ENCODE measurements at regions of chr17 and their contacts with region 1.

Region 1: DNA sequence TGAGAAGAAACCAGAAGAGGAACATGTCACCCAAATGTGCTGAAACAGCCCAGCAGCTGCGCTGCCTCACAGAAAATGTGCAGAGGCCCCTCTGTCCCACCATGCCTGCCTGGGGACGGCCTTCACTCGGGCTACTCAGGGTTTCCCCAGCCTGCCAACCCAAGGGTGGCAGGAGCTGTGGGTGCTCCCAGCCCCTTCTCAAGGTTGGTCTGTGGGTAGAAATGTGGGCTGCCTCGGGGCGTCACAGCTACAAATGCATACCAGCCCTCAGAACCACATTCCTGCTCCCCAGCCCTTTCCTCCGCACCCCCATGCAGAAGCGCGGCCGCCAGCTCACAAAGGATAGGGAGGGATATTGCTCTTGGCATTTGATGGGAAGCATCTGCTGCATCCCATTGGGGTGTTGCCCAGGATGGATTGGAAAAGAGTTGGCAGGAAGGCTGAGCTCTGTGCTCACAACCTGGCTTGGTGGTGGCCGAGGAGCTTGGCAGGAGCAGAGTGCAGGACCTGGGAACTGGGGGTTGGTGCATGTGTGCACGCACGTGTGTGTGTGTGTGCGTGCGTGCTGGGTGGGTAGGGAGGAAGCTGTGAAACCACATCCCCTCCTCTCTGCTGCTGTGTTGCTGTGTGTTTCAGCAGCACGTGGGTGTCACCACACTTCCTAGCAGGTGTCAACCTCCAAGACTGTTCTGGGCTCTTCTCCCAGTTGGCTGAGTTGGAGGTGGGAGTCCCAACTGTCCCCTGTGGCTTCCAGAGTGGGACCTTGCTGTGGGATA is 304.4 kb downstream of the SEC14L1 start:
- DNase-seq: peak; percentile 77 to 98
- ATAC-seq: peak; percentile 61 to 84 (median 72)
- H3K4me3 ChIP-seq: peak overlapping the region; percentile 27
- H3K4me3 Mint-ChIP-seq: peak overlapping the region; percentile 67
- H3K27ac ChIP-seq: peak overlapping the region; percentile 90
- H3K27ac Mint-ChIP-seq: peak overlapping the region; percentile 86
- H3K4me1 ChIP-seq: peaks cover 98% of the 10 kb centered on the region
- H3K4me1 Mint-ChIP-seq: peaks cover 74 to 87% of the 10 kb centered on the region in 2 donors
- H3K27me3 ChIP-seq: no peaks in the 10 kb centered on the region
- H3K27me3 Mint-ChIP-seq: no peaks in the 10 kb centered on the region
- CTCF ChIP-seq: no peak

Region 2: GRCh38 chr17:77345260-77345910 is 99.8 kb before region 1 on chr17:
- intact Hi-C with region 1: loop called (anchors 1 kb)
- DNase-seq: no peak
- ATAC-seq: no peak
- H3K4me3 ChIP-seq: no peak overlapping the region
- H3K4me3 Mint-ChIP-seq: no peak overlapping the region
- H3K27ac ChIP-seq: no peak overlapping the region
- H3K27ac Mint-ChIP-seq: no peak overlapping the region
- H3K4me1 ChIP-seq: peaks cover 41% of the 10 kb centered on the region
- H3K4me1 Mint-ChIP-seq: peaks cover 50 to 51% of the 10 kb centered on the region in 2 donors
- H3K27me3 ChIP-seq: no peaks in the 10 kb centered on the region
- H3K27me3 Mint-ChIP-seq: no peaks in the 10 kb centered on the region
- CTCF ChIP-seq: no peak

Region 3: DNA sequence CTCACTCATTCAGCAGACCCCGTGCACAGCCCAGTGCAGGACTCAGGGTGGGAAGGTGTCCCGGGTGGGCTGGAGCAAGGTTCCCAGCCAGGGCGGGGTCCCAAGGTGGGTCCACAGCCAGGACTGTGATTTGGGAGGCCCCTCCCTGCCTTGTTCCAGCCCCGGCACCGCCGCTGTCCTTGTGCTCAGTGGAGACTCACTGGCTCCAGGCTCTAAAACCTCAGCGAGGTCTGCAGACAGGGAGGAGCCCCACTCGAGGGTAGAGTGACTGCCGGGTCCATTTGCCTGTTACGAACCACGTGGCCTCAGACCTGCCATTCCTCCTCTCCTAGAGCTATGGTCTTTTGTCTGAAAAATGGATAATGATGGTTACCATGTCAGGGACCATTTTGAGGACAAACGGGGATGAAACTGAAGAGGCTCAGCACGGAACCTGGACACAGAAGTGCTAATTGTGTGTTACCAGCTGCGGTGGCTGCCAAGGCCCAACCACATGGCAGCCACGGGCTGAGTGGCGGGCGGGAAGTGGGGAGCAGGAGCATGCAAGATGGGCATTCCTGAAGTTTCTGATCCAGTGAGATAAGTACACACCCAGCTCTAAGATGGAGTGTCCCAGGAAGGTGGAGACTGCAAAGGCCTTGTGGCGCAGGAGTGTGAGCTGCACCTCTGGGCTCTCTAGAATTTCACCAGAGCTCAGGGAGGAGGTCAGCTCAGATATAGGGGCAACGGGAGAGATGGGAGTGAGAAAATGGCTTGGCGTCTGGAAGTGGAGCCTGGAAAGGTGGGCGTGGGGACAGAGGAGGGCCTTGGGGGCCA is 13.2 kb after region 1 on chr17:
- intact Hi-C with region 1: loop called (anchors 2 kb)
- DNase-seq: peak in 1 of 2 donors; percentile 67
- ATAC-seq: peak in 2 of 3 donors; percentile 24 to 42
- H3K4me3 ChIP-seq: no peak overlapping the region
- H3K4me3 Mint-ChIP-seq: peak overlapping the region; percentile 78
- H3K27ac ChIP-seq: peak overlapping the region; percentile 85
- H3K27ac Mint-ChIP-seq: peak overlapping the region; percentile 94
- H3K4me1 ChIP-seq: peaks cover 100% of the 10 kb centered on the region
- H3K4me1 Mint-ChIP-seq: peaks cover 87 to 99% of the 10 kb centered on the region in 2 donors
- H3K27me3 ChIP-seq: no peaks in the 10 kb centered on the region
- H3K27me3 Mint-ChIP-seq: no peaks in the 10 kb centered on the region
- CTCF ChIP-seq: no peak

Region 4: GRCh38 chr17:77485089-77485833 is 40.1 kb after region 1 on chr17:
- intact Hi-C with region 1: loop called (anchors 2 kb)
- DNase-seq: peak; percentile 54 to 58
- ATAC-seq: peak; percentile 30 to 74 (median 53)
- H3K4me3 ChIP-seq: no peak overlapping the region
- H3K4me3 Mint-ChIP-seq: no peak overlapping the region
- H3K27ac ChIP-seq: peak overlapping the region; percentile 47
- H3K27ac Mint-ChIP-seq: no peak overlapping the region
- H3K4me1 ChIP-seq: peaks cover 79% of the 10 kb centered on the region
- H3K4me1 Mint-ChIP-seq: peaks cover 13 to 19% of the 10 kb centered on the region in 2 donors
- H3K27me3 ChIP-seq: no peaks in the 10 kb centered on the region
- H3K27me3 Mint-ChIP-seq: no peaks in the 10 kb centered on the region
- CTCF ChIP-seq: no peak

Region 5: GRCh38 chr17:77571155-77571981 is 126.2 kb after region 1 on chr17:
- intact Hi-C with region 1: no loop called
- DNase-seq: peak in 1 of 2 donors; percentile 48
- ATAC-seq: peak; percentile 48 to 68 (median 53)
- H3K4me3 ChIP-seq: no peak overlapping the region
- H3K4me3 Mint-ChIP-seq: peak overlapping the region; percentile 73
- H3K27ac ChIP-seq: no peak overlapping the region
- H3K27ac Mint-ChIP-seq: peak overlapping the region in 1 of 2 donors; percentile 21
- H3K4me1 ChIP-seq: peaks cover 11% of the 10 kb centered on the region
- H3K4me1 Mint-ChIP-seq: peaks cover 8 to 11% of the 10 kb centered on the region in 2 donors
- H3K27me3 ChIP-seq: peaks cover 6% of the 10 kb centered on the region
- H3K27me3 Mint-ChIP-seq: peaks cover 16 to 18% of the 10 kb centered on the region in 2 donors
- CTCF ChIP-seq: no peak

Measured in natural killer cell (primary cell).